Activated CD4-positive, alpha-beta memory T cell treated with anti-CD3 and anti-CD28 coated beads for 36 hours (primary cell): ENCODE measurements at regions of chr17 and their contacts with region 1.

Region 1: GRCh38 chr17:28896884-28897768 is at the start of gene FLOT2:
- DNase-seq: peak; percentile 81
- H3K4me3 Mint-ChIP-seq: peak within 1 kb of the TSS; percentile 97
- H3K27ac Mint-ChIP-seq: peak within 1 kb of the TSS; percentile 92
- H3K4me1 Mint-ChIP-seq: peaks cover 64% of the 10 kb centered on the region
- H3K27me3 Mint-ChIP-seq: no peaks in the 10 kb centered on the region
- total RNA-seq, gene FLOT2: 110 to 118 TPM

Region 2: DNA sequence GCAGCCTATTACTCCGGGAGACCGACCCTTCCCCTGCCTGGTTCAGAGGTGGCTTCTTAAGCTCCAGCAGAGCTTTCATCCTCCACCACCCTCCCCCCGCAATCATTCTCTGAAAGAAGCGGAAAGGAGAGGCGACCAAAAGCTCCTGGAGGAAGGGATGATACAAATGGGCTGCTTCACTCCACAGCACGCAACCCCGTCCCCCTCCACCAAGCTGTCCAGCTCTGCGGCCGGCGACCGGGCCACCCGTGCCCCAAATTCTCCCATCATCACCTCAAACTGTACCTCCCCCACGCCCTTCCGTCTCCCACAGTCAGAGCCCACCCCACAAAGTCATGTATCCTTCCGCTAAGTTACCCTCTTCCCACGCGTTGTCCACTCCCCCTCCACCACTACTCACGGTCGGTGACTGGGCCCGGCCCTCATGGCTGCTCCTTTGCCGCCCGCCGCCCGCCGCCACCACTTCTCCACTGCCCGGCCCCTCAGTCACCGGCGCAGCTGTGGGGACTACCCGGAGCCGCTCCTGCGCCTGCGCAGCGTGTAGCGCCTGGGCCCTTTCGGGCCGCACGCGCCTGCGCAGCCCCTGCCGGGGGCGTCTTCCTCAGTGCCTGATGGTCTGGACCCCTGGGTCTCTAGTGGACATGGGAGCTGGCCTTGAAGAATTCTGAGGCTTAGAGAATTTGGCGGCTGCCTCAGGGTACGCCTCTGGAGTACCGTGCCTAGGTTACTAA is 54.7 kb before region 1 on chr17 and contains the start of gene FAM222B:
- CTCF ChIA-PET with region 1: interaction called, 10 read pairs
- POLR2A ChIA-PET with region 1: interaction called, 4 read pairs
- intact Hi-C with region 1: no loop called
- DNase-seq: peak; percentile 91
- H3K4me3 Mint-ChIP-seq: peak within 1 kb of the TSS; percentile 95
- H3K27ac Mint-ChIP-seq: peak within 1 kb of the TSS; percentile 88
- H3K4me1 Mint-ChIP-seq: peaks cover 24% of the 10 kb centered on the region
- H3K27me3 Mint-ChIP-seq: no peaks in the 10 kb centered on the region
- total RNA-seq, gene FAM222B: 18.6 to 21.5 TPM

Region 3: DNA sequence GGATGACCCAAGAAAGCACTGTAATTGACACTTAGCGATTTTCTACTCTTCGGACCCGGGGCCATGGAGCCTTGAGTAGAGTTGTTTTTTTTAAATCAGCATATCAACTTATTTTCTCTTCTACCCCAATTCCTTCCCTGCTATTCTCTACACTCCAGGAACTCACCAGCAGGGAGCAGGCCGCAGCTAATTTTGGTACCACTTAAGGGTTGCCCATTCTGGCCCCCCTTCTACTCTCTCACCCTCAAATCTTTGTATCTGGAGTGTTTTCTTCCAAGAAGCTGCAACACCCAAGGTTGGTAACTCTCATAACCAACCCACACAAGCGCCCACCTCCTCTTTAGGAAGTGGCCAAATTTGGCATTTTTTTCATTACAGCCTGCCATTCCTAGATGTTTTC is 47.8 kb before region 1 on chr17:
- CTCF ChIA-PET with region 1: interaction called, 19 read pairs
- POLR2A ChIA-PET with region 1: interaction called, 3 read pairs
- intact Hi-C with region 1: loop called (anchors 2 kb)
- DNase-seq: peak; percentile 43
- H3K4me3 Mint-ChIP-seq: no peak overlapping the region
- H3K27ac Mint-ChIP-seq: no peak overlapping the region
- H3K4me1 Mint-ChIP-seq: peaks cover 4% of the 10 kb centered on the region
- H3K27me3 Mint-ChIP-seq: no peaks in the 10 kb centered on the region

Region 4: DNA sequence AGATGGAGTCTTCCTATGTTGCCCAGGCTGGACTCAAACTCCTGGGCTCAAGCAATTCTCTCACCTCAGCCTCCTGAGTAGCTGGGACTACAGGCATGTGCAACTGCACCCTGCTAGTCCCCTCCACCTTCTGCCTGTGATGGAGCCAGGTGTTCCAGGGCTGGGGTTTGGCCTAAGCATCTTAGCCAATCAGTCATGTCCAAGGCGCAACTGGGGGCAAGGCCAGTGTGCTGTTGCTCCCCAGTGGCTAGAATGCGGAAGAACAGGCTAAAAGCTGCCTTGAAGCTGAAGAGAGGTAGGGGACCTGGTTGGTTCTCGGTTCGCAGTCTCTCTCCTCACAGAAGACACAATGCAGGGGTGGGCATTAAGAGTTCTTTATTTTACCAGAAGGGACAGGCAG is 18.1 kb before region 1 on chr17:
- CTCF ChIA-PET with region 1: interaction called, 3 read pairs
- POLR2A ChIA-PET with region 1: interaction called, 6 read pairs
- intact Hi-C with region 1: loop called (anchors 1 kb)
- DNase-seq: peak; percentile 39
- H3K4me3 Mint-ChIP-seq: no peak overlapping the region
- H3K27ac Mint-ChIP-seq: no peak overlapping the region
- H3K4me1 Mint-ChIP-seq: peaks cover 32% of the 10 kb centered on the region
- H3K27me3 Mint-ChIP-seq: no peaks in the 10 kb centered on the region

Region 5: GRCh38 chr17:28916302-28916934 is 19.3 kb after region 1 on chr17:
- CTCF ChIA-PET with region 1: interaction called, 17 read pairs
- POLR2A ChIA-PET with region 1: no interaction called
- intact Hi-C with region 1: no loop called
- DNase-seq: peak; percentile 56
- H3K4me3 Mint-ChIP-seq: no peak overlapping the region
- H3K27ac Mint-ChIP-seq: no peak overlapping the region
- H3K4me1 Mint-ChIP-seq: peaks cover 14% of the 10 kb centered on the region
- H3K27me3 Mint-ChIP-seq: no peaks in the 10 kb centered on the region

Region 6: DNA sequence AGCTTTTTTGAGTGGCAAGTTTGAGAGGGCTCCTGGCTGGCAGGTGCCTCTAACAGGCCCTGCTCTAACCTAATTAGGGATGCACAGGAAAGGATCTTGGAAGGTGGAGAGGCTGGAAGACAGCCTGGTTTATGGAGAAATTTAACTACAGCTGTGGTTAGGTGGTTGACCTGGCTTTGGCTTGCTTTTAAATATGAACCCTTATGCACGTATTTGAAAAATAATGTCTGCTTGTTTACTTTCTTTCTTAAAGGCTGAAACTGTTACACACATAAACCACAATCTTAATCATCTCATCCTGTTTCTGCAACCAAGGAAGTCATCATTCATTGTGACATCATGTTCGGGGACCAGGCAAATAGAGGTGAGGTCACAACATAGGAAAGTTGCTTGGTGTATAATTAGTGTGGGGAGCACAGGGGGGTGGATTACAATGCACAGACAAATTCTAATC is 28.8 kb after region 1 on chr17:
- CTCF ChIA-PET with region 1: interaction called, 10 read pairs
- POLR2A ChIA-PET with region 1: interaction called, 3 read pairs
- intact Hi-C with region 1: loop called (anchors 1 kb)
- DNase-seq: peak; percentile 53
- H3K4me3 Mint-ChIP-seq: peak overlapping the region; percentile 50
- H3K27ac Mint-ChIP-seq: peak overlapping the region; percentile 87
- H3K4me1 Mint-ChIP-seq: peaks cover 59% of the 10 kb centered on the region
- H3K27me3 Mint-ChIP-seq: no peaks in the 10 kb centered on the region